Upper lobe of right lung (tissue), 1 donor: ENCODE measurements at regions of chr11 and their contacts with region 1.

Region 1: DNA sequence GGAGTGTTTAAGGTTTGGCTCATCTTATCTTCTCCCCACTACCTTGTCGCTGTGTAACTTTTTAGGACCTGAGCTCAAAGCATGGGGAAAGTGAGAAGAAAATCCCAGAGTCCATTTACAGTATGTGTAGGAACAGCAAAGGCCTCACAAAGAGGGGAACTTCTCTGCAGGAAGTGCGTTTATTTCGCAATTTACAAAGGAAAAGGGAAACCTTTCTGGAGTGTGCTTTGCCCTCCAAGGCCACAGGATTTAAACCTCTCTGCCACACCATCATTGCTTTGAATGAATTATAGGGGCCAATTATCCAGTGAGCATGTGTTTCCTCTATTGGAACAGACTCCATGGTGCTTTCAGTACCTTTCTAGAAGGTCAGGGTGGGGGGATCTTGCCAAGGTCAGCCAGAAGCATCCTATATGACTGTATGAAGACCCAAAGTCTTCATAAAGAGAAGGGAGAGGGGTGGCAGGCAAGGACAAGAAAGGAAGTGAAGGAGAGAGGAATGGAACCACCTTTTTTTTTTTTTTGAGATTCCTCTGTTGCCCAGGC is 68.1 kb upstream of the LMO2 start:
- DNase-seq: no peak
- ATAC-seq: peak; percentile 47
- H3K4me3 ChIP-seq: no peak overlapping the region
- H3K27ac ChIP-seq: no peak overlapping the region
- H3K4me1 ChIP-seq: peaks cover 3% of the 10 kb centered on the region
- H3K27me3 ChIP-seq: no peaks in the 10 kb centered on the region
- CTCF ChIP-seq: no peak

Region 2: GRCh38 chr11:33863418-33864172 is 96.3 kb before region 1 on chr11:
- intact Hi-C with region 1: loop called (anchors 5 kb)
- DNase-seq: no peak
- ATAC-seq: no peak
- H3K4me3 ChIP-seq: no peak overlapping the region
- H3K27ac ChIP-seq: no peak overlapping the region
- H3K4me1 ChIP-seq: peaks cover 1% of the 10 kb centered on the region
- H3K27me3 ChIP-seq: peaks cover 1% of the 10 kb centered on the region
- CTCF ChIP-seq: no peak

Region 3: DNA sequence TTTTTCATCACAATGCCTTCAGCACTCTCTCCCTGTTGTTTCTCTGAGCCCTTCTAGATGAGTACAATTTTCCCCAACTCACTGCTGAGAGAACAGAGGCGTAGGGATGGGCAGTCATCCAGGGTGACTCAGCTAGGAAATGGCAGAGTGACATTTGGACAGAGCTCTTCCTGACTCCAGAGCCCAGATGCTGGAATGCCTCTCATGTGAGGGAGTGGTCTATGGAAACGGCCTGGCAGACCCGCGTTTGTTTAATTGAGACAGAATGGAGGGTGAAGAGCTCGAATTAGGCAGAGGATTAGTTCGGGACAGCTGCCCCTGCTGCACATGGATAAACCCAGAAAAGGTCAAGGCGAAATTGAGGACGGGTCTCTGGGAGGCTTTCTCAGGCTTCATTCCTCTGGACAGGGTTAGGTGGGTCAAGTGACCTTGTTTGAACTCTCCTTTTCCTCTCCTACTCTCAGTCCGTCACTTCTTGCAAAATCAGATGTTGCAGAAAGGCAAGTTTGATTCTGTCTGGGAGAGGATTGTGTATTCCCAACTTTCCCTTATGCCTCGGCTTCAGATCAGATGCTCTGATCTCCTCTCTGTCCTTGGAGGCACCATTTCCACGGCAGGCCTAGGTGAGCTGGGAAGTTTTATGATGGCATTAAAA is 60.4 kb before region 1 on chr11:
- intact Hi-C with region 1: no loop called
- DNase-seq: no peak
- ATAC-seq: peak; percentile 84
- H3K4me3 ChIP-seq: no peak overlapping the region
- H3K27ac ChIP-seq: peak overlapping the region; percentile 39
- H3K4me1 ChIP-seq: peaks cover 21% of the 10 kb centered on the region
- H3K27me3 ChIP-seq: no peaks in the 10 kb centered on the region
- CTCF ChIP-seq: no peak